Kidney (tissue), 22 donors: ENCODE measurements at regions of chr19 and their contacts with region 1.

Region 1: DNA sequence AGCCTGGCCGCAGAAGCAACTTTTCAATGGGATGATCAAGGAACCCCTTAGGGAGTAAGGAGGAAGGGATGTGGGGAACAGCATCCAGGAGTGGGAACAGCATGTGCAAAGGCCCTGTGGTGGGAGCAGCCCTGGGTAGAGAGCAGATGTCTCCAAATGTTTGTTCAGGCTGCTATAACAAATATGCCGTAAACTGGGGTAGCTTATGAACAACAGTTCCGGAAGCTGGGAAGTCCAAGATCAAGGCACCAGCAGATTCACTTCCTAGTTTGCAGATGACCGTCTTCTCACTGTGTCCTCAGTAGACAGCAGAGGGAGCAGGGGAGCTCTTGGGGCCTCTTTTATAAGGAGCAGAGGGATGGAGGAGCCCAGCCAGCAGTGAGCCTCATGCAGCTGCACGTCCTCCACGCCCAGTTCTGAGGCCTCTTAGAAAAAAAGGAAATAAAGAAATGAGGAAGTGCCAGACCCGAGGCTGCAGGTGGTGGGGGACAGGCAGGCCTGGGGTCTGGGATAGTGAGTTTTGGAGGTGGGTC is 4.2 kb upstream of the LRRC25 start:
- DNase-seq: peak; percentile 61 to 80 (median 72)
- H3K4me3 ChIP-seq: no peak overlapping the region
- H3K27ac ChIP-seq: peak overlapping the region; percentile 74 to 83
- H3K4me1 ChIP-seq: peaks cover 0 to 19% (median 0%) of the 10 kb centered on the region in 3 donors
- H3K27me3 ChIP-seq: no peaks in the 10 kb centered on the region
- CTCF ChIP-seq: peak; percentile 23

Region 2: GRCh38 chr19:18279516-18280273 is 122.0 kb before region 1 on chr19:
- intact Hi-C with region 1: loop called (anchors 10 kb)
- DNase-seq: peak; percentile 96 to 99 (median 97)
- H3K4me3 ChIP-seq: peak overlapping the region; percentile 76 to 99 (median 95)
- H3K27ac ChIP-seq: peak overlapping the region; percentile 100
- H3K4me1 ChIP-seq: peaks cover 0 to 39% (median 22%) of the 10 kb centered on the region in 3 donors
- H3K27me3 ChIP-seq: no peaks in the 10 kb centered on the region
- CTCF ChIP-seq: peak; percentile 79

Region 3: GRCh38 chr19:18340190-18340989 is 61.3 kb before region 1 on chr19 and contains the start of gene PGPEP1:
- intact Hi-C with region 1: loop called (anchors 10 kb)
- DNase-seq: peak; percentile 68 to 86 (median 81)
- H3K4me3 ChIP-seq: peak within 1 kb of the TSS; percentile 65 to 78 (median 66)
- H3K27ac ChIP-seq: peak within 1 kb of the TSS; percentile 92
- H3K4me1 ChIP-seq: peaks cover 0 to 18% (median 16%) of the 10 kb centered on the region in 3 donors
- H3K27me3 ChIP-seq: no peaks in the 10 kb centered on the region
- CTCF ChIP-seq: no peak
- total RNA-seq, gene PGPEP1: 54.5 TPM